Activated CD4-positive, alpha-beta memory T cell treated with anti-CD3 and anti-CD28 coated beads, Interleukin-2, amount 10 ng/mL, durations not matched to agents 7 days and 5 days (primary cell): ENCODE measurements at regions of chr1 and their contacts with region 1.

Region 1: DNA sequence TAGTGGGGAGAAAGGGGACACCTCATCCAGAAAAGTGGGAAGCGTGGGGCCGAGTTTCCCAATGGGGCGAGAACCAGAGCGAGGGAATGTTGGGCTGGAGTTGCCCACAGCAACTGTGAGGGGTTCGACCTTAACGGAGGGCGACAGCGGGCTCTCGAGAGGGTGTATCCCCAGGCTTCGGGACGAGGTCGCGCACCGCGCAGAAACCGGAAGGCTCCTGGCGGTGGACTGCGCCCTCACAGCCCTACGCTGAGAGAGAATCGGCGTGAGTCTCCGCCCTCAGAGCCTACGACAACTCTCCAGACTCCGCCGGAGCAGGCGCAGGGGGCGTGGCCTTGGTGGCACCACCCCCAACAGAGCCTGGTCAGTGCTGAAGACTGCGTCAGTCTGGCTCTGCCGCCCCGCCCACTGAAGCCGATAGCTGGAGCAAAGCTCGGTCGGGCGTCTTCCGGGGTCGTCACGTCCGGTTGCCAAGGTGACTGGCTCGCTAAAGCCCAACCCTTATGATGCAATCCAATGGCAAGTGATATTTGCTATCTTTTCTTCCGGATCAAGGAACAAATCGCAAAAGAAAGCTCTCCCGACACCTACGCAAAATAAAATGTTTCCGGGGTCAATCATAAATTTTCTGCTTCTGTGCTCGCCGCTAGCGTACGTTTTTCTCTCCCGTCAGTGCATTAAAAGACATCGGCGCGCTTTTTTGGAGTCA is at the start of gene LRIF1:
- DNase-seq: peak; percentile 100
- H3K4me3 Mint-ChIP-seq: peak within 1 kb of the TSS; percentile 85
- H3K27ac Mint-ChIP-seq: peak within 1 kb of the TSS; percentile 98
- H3K4me1 Mint-ChIP-seq: peaks cover 39% of the 10 kb centered on the region
- H3K27me3 Mint-ChIP-seq: peaks cover 14% of the 10 kb centered on the region
- total RNA-seq, gene LRIF1: 25.7 to 26.9 TPM

Region 2: GRCh38 chr1:110879758-110880606 is 83.9 kb before region 1 on chr1:
- CTCF ChIA-PET with region 1: interaction called, 14 read pairs
- POLR2A ChIA-PET with region 1: interaction called, 62 read pairs
- DNase-seq: peak; percentile 82
- H3K4me3 Mint-ChIP-seq: peak overlapping the region; percentile 97
- H3K27ac Mint-ChIP-seq: peak overlapping the region; percentile 100
- H3K4me1 Mint-ChIP-seq: peaks cover 63% of the 10 kb centered on the region
- H3K27me3 Mint-ChIP-seq: no peaks in the 10 kb centered on the region

Region 3: GRCh38 chr1:110916669-110917306 is 47.1 kb before region 1 on chr1:
- CTCF ChIA-PET with region 1: no interaction called
- POLR2A ChIA-PET with region 1: interaction called, 12 read pairs
- DNase-seq: peak; percentile 62
- H3K4me3 Mint-ChIP-seq: peak overlapping the region; percentile 49
- H3K27ac Mint-ChIP-seq: peak overlapping the region; percentile 70
- H3K4me1 Mint-ChIP-seq: peaks cover 20% of the 10 kb centered on the region
- H3K27me3 Mint-ChIP-seq: peaks cover 11% of the 10 kb centered on the region

Region 4: DNA sequence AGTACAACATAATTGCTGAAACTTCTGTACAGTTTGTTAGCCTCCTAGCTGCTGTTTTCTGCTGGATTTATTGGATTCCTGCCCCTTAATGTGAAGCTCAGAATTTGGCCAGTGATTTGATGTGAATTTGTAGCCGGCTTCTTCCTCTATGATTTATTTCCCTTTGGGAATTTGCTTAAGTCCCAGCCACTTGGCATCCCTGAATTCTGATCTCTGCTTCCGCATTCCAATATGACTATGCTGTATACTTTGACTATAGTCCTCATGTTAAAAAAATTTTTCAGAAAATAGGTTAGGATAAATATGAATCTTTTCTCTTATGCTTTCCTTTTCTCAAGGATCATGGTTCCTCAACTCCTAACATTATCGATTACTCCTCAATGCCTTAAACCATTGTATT is 12.2 kb after region 1 on chr1:
- CTCF ChIA-PET with region 1: no interaction called
- POLR2A ChIA-PET with region 1: no interaction called
- DNase-seq: no peak
- H3K4me3 Mint-ChIP-seq: no peak overlapping the region
- H3K27ac Mint-ChIP-seq: no peak overlapping the region
- H3K4me1 Mint-ChIP-seq: no peaks in the 10 kb centered on the region
- H3K27me3 Mint-ChIP-seq: peaks cover 58% of the 10 kb centered on the region

Region 5: DNA sequence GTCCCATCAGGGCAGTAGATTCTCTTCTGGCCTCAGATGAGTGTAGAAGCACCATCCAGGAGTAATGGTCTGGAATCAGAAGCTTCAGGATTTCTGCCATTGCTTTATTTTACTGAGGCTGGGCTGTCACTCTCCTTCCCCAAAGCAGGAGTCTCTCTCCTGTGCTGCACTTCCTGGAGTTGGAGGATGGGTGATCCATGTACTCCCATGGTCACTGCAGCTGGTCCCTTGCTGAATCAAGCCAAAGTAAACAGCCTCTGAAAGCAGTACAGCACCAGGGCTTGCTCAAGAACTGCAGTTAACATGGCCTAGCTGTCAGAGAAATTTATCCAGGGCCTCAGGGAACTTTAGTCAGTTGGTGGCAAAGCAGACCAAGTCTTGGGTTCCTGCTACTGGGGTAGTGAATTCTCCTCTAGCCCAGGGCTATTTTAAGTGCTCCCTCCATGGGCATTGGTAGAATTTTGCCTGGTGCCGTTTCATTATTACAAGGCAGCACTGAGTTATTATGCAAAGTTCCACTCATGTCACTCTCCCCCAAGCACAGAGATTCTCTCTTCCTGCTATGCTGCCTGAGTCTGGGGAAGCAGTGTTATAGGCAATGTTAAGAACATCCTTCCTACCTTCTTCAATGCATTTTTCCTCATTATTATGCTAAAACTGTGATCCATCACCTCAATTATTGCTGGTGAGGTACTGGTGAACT is 146.5 kb after region 1 on chr1:
- CTCF ChIA-PET with region 1: no interaction called
- POLR2A ChIA-PET with region 1: no interaction called
- DNase-seq: no peak
- H3K4me3 Mint-ChIP-seq: no peak overlapping the region
- H3K27ac Mint-ChIP-seq: no peak overlapping the region
- H3K4me1 Mint-ChIP-seq: no peaks in the 10 kb centered on the region
- H3K27me3 Mint-ChIP-seq: peaks cover 3% of the 10 kb centered on the region

Region 6: GRCh38 chr1:111139956-111140679 is 176.3 kb after region 1 on chr1 and contains the starts of genes CEPT1 and DRAM2:
- CTCF ChIA-PET with region 1: no interaction called
- POLR2A ChIA-PET with region 1: interaction called, 11 read pairs
- DNase-seq: peak; percentile 94
- H3K4me3 Mint-ChIP-seq: peak within 1 kb of the TSS; percentile 99
- H3K27ac Mint-ChIP-seq: peak within 1 kb of the TSS; percentile 86
- H3K4me1 Mint-ChIP-seq: peaks cover 50% of the 10 kb centered on the region
- H3K27me3 Mint-ChIP-seq: no peaks in the 10 kb centered on the region
- total RNA-seq, gene CEPT1: 31.0 to 32.5 TPM
- total RNA-seq, gene DRAM2: 33.0 to 38.0 TPM